Activated T-helper 2 cell treated with anti-CD3 and anti-CD28 coated beads, Interferon-gamma antibody, Interleukin-2, Interleukin-4, amounts not matched to agents 10 μg/mL and 5 μg/mL and 100 μg/mL, durations not matched to agents 14 hours and 24 hours and 36 hours (primary cell): ENCODE measurements at regions of chr1 and their contacts with region 1.

Region 1: DNA sequence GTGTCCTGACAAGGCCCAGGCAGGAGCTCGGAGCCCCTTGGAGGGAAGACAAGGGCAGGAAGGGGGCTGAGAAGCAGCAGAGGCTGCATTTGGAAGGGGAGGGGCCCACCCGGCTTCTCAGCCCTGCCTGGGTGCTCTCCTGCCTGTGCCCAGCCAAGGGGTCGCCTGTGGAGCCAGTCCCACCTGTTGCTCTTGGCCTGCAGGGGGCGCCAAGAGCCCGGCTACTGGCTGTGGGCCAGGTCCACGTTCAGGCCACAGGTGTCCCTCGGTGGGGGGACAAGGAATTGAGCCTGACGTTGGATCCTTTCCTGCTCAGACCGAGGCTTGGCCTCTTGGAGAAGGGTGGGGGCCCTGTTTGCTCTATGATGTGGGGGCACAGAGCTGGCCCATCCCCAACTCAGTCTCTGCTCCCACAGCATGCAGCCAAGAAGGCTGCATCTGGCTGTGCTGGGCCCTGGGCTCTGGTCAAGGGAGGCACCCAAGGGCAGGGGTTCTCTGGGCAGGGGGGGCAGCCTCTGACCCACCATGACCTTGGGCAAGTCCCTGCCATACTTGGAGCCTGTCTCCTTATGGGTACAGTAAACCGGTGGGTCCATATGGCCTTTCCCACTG is 10.9 kb downstream of the WNT4 start:
- DNase-seq: peak; percentile 25
- H3K4me3 Mint-ChIP-seq: no peak overlapping the region
- H3K27ac Mint-ChIP-seq: no peak overlapping the region
- H3K4me1 Mint-ChIP-seq: no peaks in the 10 kb centered on the region
- H3K27me3 Mint-ChIP-seq: no peaks in the 10 kb centered on the region

Region 2: GRCh38 chr1:21845646-21846641 is 286.0 kb before region 1 on chr1:
- intact Hi-C with region 1: no loop called
- DNase-seq: no peak
- H3K4me3 Mint-ChIP-seq: no peak overlapping the region
- H3K27ac Mint-ChIP-seq: no peak overlapping the region
- H3K4me1 Mint-ChIP-seq: no peaks in the 10 kb centered on the region
- H3K27me3 Mint-ChIP-seq: no peaks in the 10 kb centered on the region

Region 3: GRCh38 chr1:22262583-22262982 is 130.6 kb after region 1 on chr1:
- intact Hi-C with region 1: no loop called
- DNase-seq: no peak
- H3K4me3 Mint-ChIP-seq: no peak overlapping the region
- H3K27ac Mint-ChIP-seq: no peak overlapping the region
- H3K4me1 Mint-ChIP-seq: no peaks in the 10 kb centered on the region
- H3K27me3 Mint-ChIP-seq: no peaks in the 10 kb centered on the region

Region 4: DNA sequence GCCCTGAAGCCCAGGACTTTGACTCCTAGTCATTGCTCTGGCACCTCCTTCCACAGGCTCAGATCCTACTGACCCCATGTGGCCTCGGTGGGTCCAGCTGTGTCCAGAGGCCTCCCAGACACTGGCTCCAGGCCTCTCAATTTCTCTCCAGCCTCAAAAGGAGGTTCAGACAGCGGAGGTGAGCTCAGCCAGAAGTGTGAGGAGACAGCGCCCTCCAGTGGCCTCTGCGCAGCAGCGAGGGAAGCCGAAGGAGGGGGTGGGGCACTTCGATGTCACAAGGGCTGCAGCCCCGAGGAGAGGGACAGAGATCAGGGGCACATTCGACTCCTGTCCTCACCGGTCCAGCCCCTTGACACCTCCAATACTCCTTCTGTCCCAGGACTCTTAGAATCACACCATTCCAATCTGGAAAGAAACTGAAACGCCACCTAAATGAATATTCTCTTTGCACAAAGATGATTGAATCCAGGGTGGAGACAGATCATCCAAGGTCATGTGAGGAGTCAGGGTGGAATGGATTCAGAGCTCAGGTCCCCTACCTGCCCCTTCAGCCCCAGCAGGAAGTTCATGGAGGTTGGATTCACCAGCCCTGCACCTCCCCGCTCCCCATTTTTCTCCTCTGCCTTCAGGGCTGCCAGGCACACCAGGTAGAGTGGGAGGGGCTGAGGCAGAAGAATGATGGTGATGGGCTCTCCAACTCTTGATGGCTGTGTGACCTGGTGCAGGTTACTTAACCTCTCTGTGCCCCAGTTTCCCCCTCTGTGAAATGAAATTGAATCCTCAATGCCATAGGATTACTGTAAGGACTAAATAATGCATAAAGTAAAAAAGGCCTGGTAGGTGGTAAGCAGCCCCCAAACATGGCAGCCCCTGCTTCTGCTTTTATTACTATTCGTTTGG is 284.8 kb after region 1 on chr1:
- intact Hi-C with region 1: loop called (anchors 1 kb)
- DNase-seq: peak; percentile 62
- H3K4me3 Mint-ChIP-seq: no peak overlapping the region
- H3K27ac Mint-ChIP-seq: no peak overlapping the region
- H3K4me1 Mint-ChIP-seq: no peaks in the 10 kb centered on the region
- H3K27me3 Mint-ChIP-seq: peaks cover 18% of the 10 kb centered on the region

Region 5: DNA sequence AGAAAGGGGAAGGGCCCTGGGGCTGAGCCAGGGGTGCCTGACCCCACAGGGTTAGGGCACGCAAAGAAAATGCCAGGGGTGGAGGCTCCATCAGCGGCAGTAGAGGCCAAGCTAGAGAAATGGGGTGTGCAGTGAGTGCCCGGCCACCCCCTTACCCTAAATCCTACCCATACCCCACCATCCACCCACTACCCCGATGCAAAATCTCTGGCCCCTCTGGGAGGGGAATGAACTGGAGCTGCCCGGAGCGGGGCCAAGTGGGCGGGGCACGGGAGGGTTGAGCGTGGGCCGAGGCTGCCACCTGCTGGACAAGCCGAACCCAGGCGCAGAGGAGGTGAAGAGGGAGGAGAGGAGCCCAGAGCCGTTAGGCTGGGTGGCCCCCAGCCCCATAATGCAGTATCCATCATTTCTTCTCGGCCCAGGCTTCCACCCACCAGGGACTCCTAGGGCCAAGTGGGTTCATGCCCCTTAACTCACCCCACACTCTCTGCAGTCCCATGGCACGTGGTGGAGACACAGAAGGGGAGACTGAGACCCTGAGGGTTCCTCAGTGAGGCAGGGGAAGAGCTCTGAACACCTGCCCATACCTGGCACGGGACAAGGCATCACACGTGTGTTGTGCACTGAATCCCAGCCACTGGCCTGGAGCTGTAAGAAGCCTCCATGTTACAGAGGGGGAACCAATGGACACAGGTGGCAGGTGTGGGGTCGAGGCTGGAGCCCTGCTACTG is 510.1 kb after region 1 on chr1:
- intact Hi-C with region 1: loop called (anchors 5 kb)
- DNase-seq: peak; percentile 44
- H3K4me3 Mint-ChIP-seq: no peak overlapping the region
- H3K27ac Mint-ChIP-seq: no peak overlapping the region
- H3K4me1 Mint-ChIP-seq: no peaks in the 10 kb centered on the region
- H3K27me3 Mint-ChIP-seq: no peaks in the 10 kb centered on the region